ENCODE measurements at regions of chr12 and their contacts with region 1.

Region 1: DNA sequence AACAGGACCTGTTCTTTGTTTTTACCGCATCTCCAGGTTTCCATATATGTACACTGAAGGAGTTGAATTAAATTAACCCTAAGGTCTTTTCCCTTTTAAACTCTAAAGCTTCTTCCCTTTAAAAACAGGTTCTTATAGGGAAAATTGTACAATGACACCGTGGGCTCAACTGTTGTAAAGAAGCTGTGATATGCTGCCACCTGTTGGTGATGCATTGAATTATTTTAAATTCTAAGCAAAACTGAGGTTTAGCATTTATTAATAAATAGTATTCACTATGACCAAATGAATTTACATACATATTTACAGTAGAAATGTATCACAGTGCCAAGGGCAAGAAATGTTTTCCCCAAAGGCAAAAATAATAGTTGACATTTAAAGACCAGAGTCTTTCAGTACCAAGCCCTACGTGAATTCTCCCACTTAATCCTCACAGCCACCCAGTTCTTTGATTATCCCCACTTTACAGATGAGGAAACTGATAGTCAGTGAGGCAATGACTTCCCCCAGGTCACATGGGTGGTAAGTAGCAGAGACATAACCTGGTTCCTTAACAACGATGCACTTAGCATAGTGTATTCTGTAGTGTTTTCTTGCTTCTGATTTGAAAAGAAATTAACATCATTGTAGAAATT is 35.7 kb upstream of the TMEM263 start:
- DNase-seq: peak; percentile 63
- ATAC-seq: peak; percentile 50; the same call in 1 of the 2 replicates
- H3K4me3 ChIP-seq: no peak overlapping the region
- H3K27ac ChIP-seq: no peak overlapping the region
- H3K4me1 ChIP-seq: no peaks in the 10 kb centered on the region
- H3K27me3 ChIP-seq: peaks cover 10% of the 10 kb centered on the region
- CTCF ChIP-seq: peak; percentile 81
- POLR2A ChIP-seq: no peak
- RAD21 ChIP-seq: peak; percentile 87

Region 2: GRCh38 chr12:106234449-106234848 is 685.6 kb before region 1 on chr12:
- CTCF ChIA-PET with region 1: no interaction called
- POLR2A ChIA-PET with region 1: no interaction called
- dilution Hi-C with region 1: no loop called
- in situ Hi-C with region 1: loop called (anchors 10 kb)
- intact Hi-C with region 1: no loop called
- DNase-seq: peak; percentile 67
- ATAC-seq: peak; percentile 35
- H3K4me3 ChIP-seq: no peak overlapping the region
- H3K27ac ChIP-seq: no peak overlapping the region
- H3K4me1 ChIP-seq: peaks cover 6% of the 10 kb centered on the region; the same call in 1 of the 2 replicates
- H3K27me3 ChIP-seq: no peaks in the 10 kb centered on the region
- CTCF ChIP-seq: no peak
- POLR2A ChIP-seq: no peak
- RAD21 ChIP-seq: no peak

Region 3: GRCh38 chr12:106386813-106387535 is 533.1 kb before region 1 on chr12:
- CTCF ChIA-PET with region 1: interaction called, 8 read pairs
- POLR2A ChIA-PET with region 1: no interaction called
- dilution Hi-C with region 1: loop called (anchors 25 kb)
- in situ Hi-C with region 1: loop called (anchors 5 kb)
- intact Hi-C with region 1: loop called (anchors 1 kb)
- DNase-seq: peak; percentile 65
- ATAC-seq: peak; percentile 77
- H3K4me3 ChIP-seq: no peak overlapping the region
- H3K27ac ChIP-seq: no peak overlapping the region
- H3K4me1 ChIP-seq: no peaks in the 10 kb centered on the region
- H3K27me3 ChIP-seq: no peaks in the 10 kb centered on the region
- CTCF ChIP-seq: no peak
- POLR2A ChIP-seq: no peak
- RAD21 ChIP-seq: no peak

Region 4: DNA sequence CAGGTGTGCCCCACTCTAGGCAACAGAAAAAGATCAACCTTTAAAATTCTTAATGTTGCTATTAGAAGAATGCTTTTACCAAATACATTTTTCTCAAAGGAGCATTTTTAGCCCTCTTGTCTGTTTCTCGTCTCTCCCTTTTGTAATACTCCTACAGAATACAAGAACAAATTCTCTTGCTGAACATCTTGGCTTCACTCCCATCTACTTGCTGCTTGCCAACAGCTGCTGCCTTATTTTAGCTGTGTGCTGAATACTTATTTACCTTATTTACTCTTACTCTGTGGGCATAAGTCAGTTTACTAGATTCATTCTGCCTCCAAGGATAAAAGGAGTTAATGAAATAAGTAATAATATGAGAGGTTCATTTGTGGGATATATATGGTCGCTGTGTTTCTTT is 491.6 kb before region 1 on chr12:
- CTCF ChIA-PET with region 1: no interaction called
- POLR2A ChIA-PET with region 1: no interaction called
- dilution Hi-C with region 1: no loop called
- in situ Hi-C with region 1: no loop called
- intact Hi-C with region 1: no loop called
- DNase-seq: peak; percentile 52
- ATAC-seq: peak; percentile 57
- H3K4me3 ChIP-seq: no peak overlapping the region
- H3K27ac ChIP-seq: no peak overlapping the region
- H3K4me1 ChIP-seq: no peaks in the 10 kb centered on the region
- H3K27me3 ChIP-seq: no peaks in the 10 kb centered on the region
- CTCF ChIP-seq: no peak
- POLR2A ChIP-seq: no peak
- RAD21 ChIP-seq: no peak

Region 5: DNA sequence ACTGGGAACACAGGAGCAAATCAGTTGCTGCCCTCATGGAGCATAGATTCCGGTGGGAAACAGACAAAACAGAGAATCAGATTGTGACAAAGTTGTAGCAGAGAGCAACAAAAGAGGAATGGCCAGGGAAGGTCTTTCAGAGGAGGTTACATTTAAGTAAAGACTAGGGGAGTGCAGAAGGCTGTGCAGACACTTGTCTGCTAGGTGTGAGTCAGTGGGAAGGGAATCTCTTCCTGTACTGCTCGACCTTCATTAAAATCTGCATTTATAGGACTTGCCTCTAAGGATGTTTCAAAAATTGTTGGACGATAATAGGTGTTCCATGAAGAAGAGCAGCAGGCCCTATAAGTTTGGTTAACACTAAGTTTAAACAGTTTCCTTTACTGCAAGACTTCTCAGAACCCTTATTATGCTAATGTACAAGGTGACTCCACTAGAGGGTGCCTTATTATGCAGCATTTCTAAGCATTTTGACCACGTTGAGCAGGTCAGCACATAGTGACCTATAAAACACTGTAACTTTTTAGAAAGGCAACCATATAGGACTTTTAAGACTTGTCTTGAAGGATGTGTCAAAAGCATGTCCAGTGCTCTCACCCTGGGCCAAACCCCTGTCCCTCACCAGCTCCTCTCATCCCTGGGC is 237.3 kb before region 1 on chr12:
- CTCF ChIA-PET with region 1: no interaction called
- POLR2A ChIA-PET with region 1: no interaction called
- dilution Hi-C with region 1: no loop called
- in situ Hi-C with region 1: no loop called
- intact Hi-C with region 1: loop called (anchors 2 kb)
- DNase-seq: peak; percentile 15
- ATAC-seq: peak; percentile 56; the same call in 1 of the 2 replicates
- H3K4me3 ChIP-seq: no peak overlapping the region
- H3K27ac ChIP-seq: no peak overlapping the region
- H3K4me1 ChIP-seq: no peaks in the 10 kb centered on the region
- H3K27me3 ChIP-seq: no peaks in the 10 kb centered on the region; the same call in 1 of the 2 replicates
- CTCF ChIP-seq: peak; percentile 30
- POLR2A ChIP-seq: no peak
- RAD21 ChIP-seq: peak; percentile 30; the same call in 1 of the 2 replicates

Region 6: DNA sequence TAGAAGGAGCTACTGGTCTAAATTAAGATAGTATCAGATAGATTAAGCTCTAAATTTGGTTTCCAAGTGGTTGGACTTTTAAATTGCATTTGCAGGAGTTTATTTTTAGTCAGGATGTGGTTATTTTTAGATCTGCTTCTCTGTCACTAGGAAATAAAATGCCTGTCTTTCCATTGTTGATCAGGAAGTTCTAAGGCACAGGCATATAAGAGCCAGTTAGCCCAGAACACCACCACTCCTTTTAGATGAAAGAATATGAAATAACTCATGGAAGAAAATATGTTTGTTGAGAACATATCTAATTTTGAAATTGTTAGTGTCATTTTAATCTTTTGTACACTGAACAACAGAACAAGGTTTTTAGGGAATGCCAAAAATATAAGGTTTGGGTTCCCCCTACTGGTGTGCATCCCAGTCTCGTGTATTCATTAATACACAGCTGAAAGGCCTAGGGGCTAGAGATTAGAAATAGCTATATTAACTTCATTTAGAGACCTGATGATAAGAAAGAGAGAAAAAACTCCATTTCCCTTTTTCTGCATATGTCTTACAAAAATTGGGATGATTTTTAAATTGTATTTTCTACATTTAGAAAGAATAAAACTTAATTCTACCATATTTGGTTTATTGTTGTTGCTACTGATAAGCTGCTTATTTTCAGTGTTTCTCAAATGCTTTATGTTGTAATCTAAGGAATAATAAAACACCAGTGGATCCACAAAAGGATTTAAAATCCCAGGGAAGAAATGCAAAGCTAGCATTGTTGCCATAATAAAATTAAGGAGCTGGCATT is 78.3 kb before region 1 on chr12:
- CTCF ChIA-PET with region 1: interaction called, 4 read pairs
- POLR2A ChIA-PET with region 1: no interaction called
- dilution Hi-C with region 1: no loop called
- in situ Hi-C with region 1: no loop called
- intact Hi-C with region 1: loop called (anchors 5 kb)
- DNase-seq: peak; percentile 45
- ATAC-seq: peak; percentile 65
- H3K4me3 ChIP-seq: no peak overlapping the region
- H3K27ac ChIP-seq: no peak overlapping the region
- H3K4me1 ChIP-seq: peaks cover 5% of the 10 kb centered on the region
- H3K27me3 ChIP-seq: no peaks in the 10 kb centered on the region
- CTCF ChIP-seq: peak; percentile 65
- POLR2A ChIP-seq: no peak
- RAD21 ChIP-seq: peak; percentile 72

Region 7: GRCh38 chr12:106883426-106883825 is 36.6 kb before region 1 on chr12:
- CTCF ChIA-PET with region 1: no interaction called
- POLR2A ChIA-PET with region 1: no interaction called
- dilution Hi-C with region 1: no loop called
- in situ Hi-C with region 1: no loop called
- intact Hi-C with region 1: no loop called
- DNase-seq: peak; percentile 80
- ATAC-seq: peak; percentile 61
- H3K4me3 ChIP-seq: no peak overlapping the region
- H3K27ac ChIP-seq: no peak overlapping the region
- H3K4me1 ChIP-seq: peaks cover 6% of the 10 kb centered on the region
- H3K27me3 ChIP-seq: no peaks in the 10 kb centered on the region
- CTCF ChIP-seq: no peak
- POLR2A ChIP-seq: no peak
- RAD21 ChIP-seq: no peak